ENCODE measurements at regions of chr3 and their contacts with region 1.

Region 1: GRCh38 chr3:142580061-142580423 is 1.5 kb upstream of the ATR start:
- DNase-seq: no peak
- ATAC-seq: no peak
- H3K4me3 ChIP-seq: no peak overlapping the region
- H3K27ac ChIP-seq: no peak overlapping the region
- H3K4me1 ChIP-seq: peaks cover 22% of the 10 kb centered on the region
- H3K27me3 ChIP-seq: no peaks in the 10 kb centered on the region
- CTCF ChIP-seq: no peak
- POLR2A ChIP-seq: no peak

Region 2: GRCh38 chr3:142251951-142252350 is 328.1 kb before region 1 on chr3:
- intact Hi-C with region 1: no loop called
- DNase-seq: no peak
- ATAC-seq: no peak
- H3K4me3 ChIP-seq: no peak overlapping the region
- H3K27ac ChIP-seq: no peak overlapping the region
- H3K4me1 ChIP-seq: no peaks in the 10 kb centered on the region
- H3K27me3 ChIP-seq: no peaks in the 10 kb centered on the region
- CTCF ChIP-seq: no peak
- POLR2A ChIP-seq: no peak

Region 3: GRCh38 chr3:142993958-142994442 is 414.0 kb after region 1 on chr3:
- intact Hi-C with region 1: loop called (anchors 5 kb)
- DNase-seq: peak; percentile 53 to 71 (median 64)
- ATAC-seq: peak; percentile 50
- H3K4me3 ChIP-seq: no peak overlapping the region
- H3K27ac ChIP-seq: no peak overlapping the region
- H3K4me1 ChIP-seq: no peaks in the 10 kb centered on the region
- H3K27me3 ChIP-seq: no peaks in the 10 kb centered on the region
- CTCF ChIP-seq: peak in 6 of 7 experiments; percentile 44 to 63 (median 62)
- POLR2A ChIP-seq: no peak

Measured in body of pancreas (tissue), 4 donors.